Gastrocnemius medialis (tissue), 4 donors: ENCODE measurements at regions of chr2 and their contacts with region 1.

Region 1: GRCh38 chr2:39379643-39380524 is 57.2 kb downstream of the MAP4K3 start:
- DNase-seq: peak in 1 of 2 donors; percentile 12
- ATAC-seq: peak; percentile 91 to 93
- H3K4me3 ChIP-seq: peak overlapping the region in 3 of 4 donors; percentile 10 to 33 (median 20)
- H3K27ac ChIP-seq: peak overlapping the region; percentile 81 to 91 (median 87)
- H3K4me1 ChIP-seq: peaks cover 57% of the 10 kb centered on the region in 2 donors
- H3K27me3 ChIP-seq: no peaks in the 10 kb centered on the region
- CTCF ChIP-seq: peak; percentile 63 to 79 (median 69)
- POLR2A ChIP-seq: no peak

Region 2: GRCh38 chr2:39436592-39437510 is 57.0 kb after region 1 on chr2 and contains the start of gene MAP4K3:
- in situ Hi-C with region 1: loop called in 3 of 4 experiments (anchors 10 kb)
- intact Hi-C with region 1: loop called (anchors 1 kb)
- DNase-seq: peak; percentile 92 to 93
- ATAC-seq: peak; percentile 82 to 83
- H3K4me3 ChIP-seq: peak within 1 kb of the TSS; percentile 89 to 97 (median 92)
- H3K27ac ChIP-seq: peak within 1 kb of the TSS; percentile 96 to 98 (median 98)
- H3K4me1 ChIP-seq: peaks cover 57 to 59% of the 10 kb centered on the region in 2 donors
- H3K27me3 ChIP-seq: no peaks in the 10 kb centered on the region
- CTCF ChIP-seq: peak in 1 of 5 experiments; percentile 11
- POLR2A ChIP-seq: peak; percentile 95 to 97
- total RNA-seq, gene MAP4K3: 23.0 to 52.1 (median 31.8) TPM

Region 3: DNA sequence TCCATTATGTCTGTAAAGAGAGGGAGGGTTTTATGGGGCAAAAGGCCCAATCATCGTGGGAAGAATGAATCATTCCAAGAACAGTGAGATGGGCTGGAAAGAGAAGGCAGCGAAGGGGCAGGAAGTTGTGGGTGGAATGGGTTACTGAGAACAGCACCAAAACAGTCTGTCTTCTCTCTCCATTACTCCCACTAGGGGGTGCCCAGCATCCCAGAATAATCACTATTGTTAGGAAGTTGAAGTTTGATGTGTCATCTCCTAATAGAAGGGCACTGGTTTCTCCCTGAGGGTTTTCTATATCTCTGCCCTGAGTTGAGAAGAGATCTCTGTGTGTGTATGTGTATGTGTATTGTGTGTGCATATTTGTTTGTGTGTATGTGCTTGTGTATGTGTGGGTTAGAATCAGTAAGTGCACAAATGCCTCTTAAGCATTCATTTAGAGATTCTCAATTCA is 133.8 kb after region 1 on chr2:
- in situ Hi-C with region 1: no loop called
- intact Hi-C with region 1: loop called (anchors 5 kb)
- DNase-seq: peak; percentile 23 to 42
- ATAC-seq: peak; percentile 50 to 79
- H3K4me3 ChIP-seq: no peak overlapping the region
- H3K27ac ChIP-seq: peak overlapping the region; percentile 37 to 75 (median 57)
- H3K4me1 ChIP-seq: peaks cover 43 to 78% of the 10 kb centered on the region in 2 donors
- H3K27me3 ChIP-seq: no peaks in the 10 kb centered on the region
- CTCF ChIP-seq: peak; percentile 44 to 62 (median 50)
- POLR2A ChIP-seq: no peak

Region 4: GRCh38 chr2:39696838-39697237 is 317.0 kb after region 1 on chr2:
- in situ Hi-C with region 1: no loop called
- intact Hi-C with region 1: loop called (anchors 5 kb)
- DNase-seq: no peak
- ATAC-seq: peak in 1 of 2 donors; percentile 36
- H3K4me3 ChIP-seq: no peak overlapping the region
- H3K27ac ChIP-seq: peak overlapping the region; percentile 38 to 61 (median 48)
- H3K4me1 ChIP-seq: peaks cover 24 to 29% of the 10 kb centered on the region in 2 donors
- H3K27me3 ChIP-seq: no peaks in the 10 kb centered on the region
- CTCF ChIP-seq: peak; percentile 19 to 36 (median 31)
- POLR2A ChIP-seq: no peak

Region 5: GRCh38 chr2:39730685-39731302 is 350.9 kb after region 1 on chr2:
- in situ Hi-C with region 1: no loop called
- intact Hi-C with region 1: loop called (anchors 5 kb)
- DNase-seq: no peak
- ATAC-seq: peak in 1 of 2 donors; percentile 64
- H3K4me3 ChIP-seq: no peak overlapping the region
- H3K27ac ChIP-seq: no peak overlapping the region
- H3K4me1 ChIP-seq: peaks cover 4 to 19% of the 10 kb centered on the region in 2 donors
- H3K27me3 ChIP-seq: no peaks in the 10 kb centered on the region
- CTCF ChIP-seq: peak in 4 of 5 experiments; percentile 14 to 42 (median 37)
- POLR2A ChIP-seq: no peak